ENCODE measurements at regions of chr17 and their contacts with region 1.

Region 1: GRCh38 chr17:7167832-7168231 is 11.3 kb downstream of the ASGR1 start:
- DNase-seq: no peak
- H3K4me3 ChIP-seq: no peak overlapping the region
- H3K27ac ChIP-seq: no peak overlapping the region
- H3K4me1 ChIP-seq: peaks cover 0 to 4% (median under 1%) of the 10 kb centered on the region in 4 experiments; a peak in 1 of 7 replicates
- H3K27me3 ChIP-seq: no peaks in the 10 kb centered on the region
- CTCF ChIP-seq: no peak
- EP300 ChIP-seq: no peak
- POLR2A ChIP-seq: no peak
- RAD21 ChIP-seq: no peak

Region 2: GRCh38 chr17:7141824-7142223 is 26.0 kb before region 1 on chr17:
- CTCF ChIA-PET with region 1: interaction called, 33 read pairs
- POLR2A ChIA-PET with region 1: interaction called, 3 read pairs
- DNase-seq: no peak
- H3K4me3 ChIP-seq: no peak overlapping the region
- H3K27ac ChIP-seq: no peak overlapping the region
- H3K4me1 ChIP-seq: peaks cover 0 to 22% (median 7%) of the 10 kb centered on the region in 4 experiments; a peak in 6 of 7 replicates
- H3K27me3 ChIP-seq: no peaks in the 10 kb centered on the region
- CTCF ChIP-seq: no peak
- EP300 ChIP-seq: no peak
- POLR2A ChIP-seq: no peak
- RAD21 ChIP-seq: no peak

Region 3: DNA sequence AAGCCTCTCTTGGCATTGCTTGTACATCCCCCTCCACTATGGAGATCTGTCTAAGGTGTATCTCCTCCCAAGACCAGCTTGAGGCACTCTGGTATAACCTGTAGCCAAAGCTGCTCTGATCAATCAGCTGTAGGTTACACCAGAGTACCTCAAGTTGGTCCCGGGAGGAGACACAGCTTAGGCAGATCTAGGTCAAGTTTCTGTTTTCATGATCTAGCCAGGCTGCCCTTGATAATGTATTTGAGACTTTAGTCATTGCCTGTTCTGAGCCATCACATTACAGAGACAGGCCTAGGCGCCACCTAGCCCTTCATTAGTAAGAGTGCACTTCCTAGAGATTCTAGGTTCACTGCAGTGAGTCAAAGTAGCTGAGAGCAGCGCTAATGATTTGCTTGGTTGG is 20.1 kb before region 1 on chr17:
- CTCF ChIA-PET with region 1: interaction called, 18 read pairs
- POLR2A ChIA-PET with region 1: interaction called, 3 read pairs
- DNase-seq: no peak
- H3K4me3 ChIP-seq: no peak overlapping the region
- H3K27ac ChIP-seq: no peak overlapping the region; the same call in 1 of the 2 replicates
- H3K4me1 ChIP-seq: peaks cover 0 to 5% (median 0%) of the 10 kb centered on the region in 4 experiments; a peak in 3 of 7 replicates
- H3K27me3 ChIP-seq: no peaks in the 10 kb centered on the region
- CTCF ChIP-seq: peak in 1 of 3 experiments; percentile 20; a peak in 1 of 4 replicates
- EP300 ChIP-seq: no peak
- POLR2A ChIP-seq: no peak
- RAD21 ChIP-seq: peak in 1 of 2 experiments; percentile 7; a peak in 1 of 4 replicates

Measured in H1 (cell line).